Activated T-helper 1 cell treated with anti-CD3 and anti-CD28 coated beads, Interleukin-12 subunit alpha, Interleukin-12 subunit beta, Interleukin-2, Interleukin-4 antibody, amounts not matched to agents 30 ng/mL and 10 ng/mL and 1 ng/mL, durations not matched to agents 14 hours and 24 hours and 36 hours (primary cell): ENCODE measurements at regions of chrX and their contacts with region 1.

Region 1: DNA sequence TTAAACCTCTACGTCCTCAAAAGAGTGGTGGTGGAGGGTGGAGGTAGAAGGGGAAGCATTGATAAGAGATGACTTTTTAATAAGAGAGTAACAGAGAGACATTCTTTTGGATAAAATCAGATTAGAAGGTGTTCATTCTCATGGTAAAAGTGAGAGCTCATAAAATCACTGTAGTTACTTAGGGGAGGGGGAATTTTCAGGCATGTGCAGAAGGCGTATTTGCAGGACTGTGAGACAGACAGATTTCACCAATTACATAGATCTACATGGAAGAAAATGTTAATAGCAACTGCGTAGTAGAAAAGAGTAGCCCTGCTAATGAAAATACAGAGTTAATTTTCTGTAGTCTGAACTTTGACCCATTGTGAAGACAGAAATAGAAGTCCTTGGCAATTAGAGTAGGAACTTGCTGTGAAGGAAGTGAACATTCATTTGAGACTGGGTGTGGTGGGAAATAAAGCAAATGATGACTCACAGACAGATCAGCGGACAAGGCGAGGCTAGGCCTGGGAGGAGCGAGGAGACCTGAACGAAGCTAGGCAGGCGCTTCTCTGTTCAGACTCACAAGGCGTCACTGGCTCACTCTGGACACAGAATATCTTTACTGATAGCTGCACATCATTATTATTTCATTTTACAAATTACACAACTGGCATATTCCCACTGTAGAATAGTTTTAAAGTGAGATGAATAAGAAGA is 57.2 kb upstream of the FAM9C start:
- DNase-seq: peak; percentile 46
- H3K4me3 Mint-ChIP-seq: peak overlapping the region; percentile 22
- H3K27ac Mint-ChIP-seq: peak overlapping the region; percentile 79
- H3K4me1 Mint-ChIP-seq: peaks cover 51% of the 10 kb centered on the region
- H3K27me3 Mint-ChIP-seq: no peaks in the 10 kb centered on the region

Region 2: DNA sequence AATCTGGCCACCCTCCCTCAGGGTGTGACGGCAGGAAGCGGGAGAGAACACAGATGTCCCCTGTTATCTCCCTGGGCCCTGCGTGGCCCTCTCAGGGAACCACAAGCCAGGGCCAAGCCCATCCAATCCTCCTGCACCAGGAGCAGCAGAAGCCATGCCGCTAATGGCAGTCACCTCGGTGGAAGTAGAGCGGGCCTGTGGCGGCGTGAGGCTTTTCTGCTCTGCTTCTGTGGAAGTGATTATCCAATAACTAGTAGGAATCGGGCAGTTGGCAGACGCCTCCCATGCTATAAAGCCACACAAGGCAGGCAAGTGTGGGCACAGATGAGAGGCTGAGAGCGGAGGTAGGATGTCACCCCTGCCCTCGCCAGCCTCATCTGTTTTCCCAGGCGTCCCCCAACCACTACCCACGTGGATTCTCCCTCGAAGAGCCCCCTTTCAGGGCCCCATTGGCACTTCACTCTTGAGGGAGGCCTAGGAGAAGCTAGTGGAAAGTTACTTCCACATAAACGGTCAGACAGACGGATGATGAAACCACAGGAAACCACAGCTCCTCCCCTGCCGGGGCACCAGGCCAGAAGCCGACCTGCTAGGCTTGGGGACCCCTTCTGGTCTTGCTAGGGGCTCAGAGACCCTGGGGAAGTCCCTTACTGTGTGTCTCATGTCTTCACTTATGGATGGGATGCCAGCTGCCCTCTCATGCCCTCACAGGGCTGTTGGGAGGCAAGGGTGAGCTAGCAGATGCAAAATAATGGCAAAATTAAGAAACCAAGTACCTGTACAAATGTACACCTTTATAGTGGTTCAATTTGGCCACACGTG is 145.5 kb before region 1 on chrX:
- intact Hi-C with region 1: no loop called
- DNase-seq: peak; percentile 60
- H3K4me3 Mint-ChIP-seq: peak overlapping the region; percentile 86
- H3K27ac Mint-ChIP-seq: peak overlapping the region; percentile 99
- H3K4me1 Mint-ChIP-seq: peaks cover 79% of the 10 kb centered on the region
- H3K27me3 Mint-ChIP-seq: no peaks in the 10 kb centered on the region

Region 3: DNA sequence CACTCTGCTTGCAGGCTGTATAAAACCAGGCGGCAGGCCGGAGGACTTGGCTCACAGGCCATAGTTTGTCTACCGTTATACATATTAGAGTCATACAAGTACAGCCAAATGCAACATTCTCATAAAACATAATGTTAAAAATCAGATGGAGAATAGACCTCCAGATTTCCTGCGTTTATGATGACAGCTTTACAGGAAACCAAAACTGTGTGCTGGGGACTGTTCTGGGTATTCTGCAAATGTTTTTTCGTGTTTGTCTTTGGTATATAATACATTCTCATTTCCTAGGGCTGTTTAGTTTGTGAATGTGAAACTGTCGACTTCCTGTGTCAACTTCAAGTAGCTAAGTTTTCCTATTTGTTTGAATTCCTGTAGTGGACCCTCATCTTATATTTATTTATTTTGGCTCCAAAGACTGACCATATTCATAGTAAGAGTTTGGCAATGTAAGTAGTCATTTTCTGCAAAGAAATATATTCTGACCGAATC is 22.3 kb after region 1 on chrX:
- intact Hi-C with region 1: loop called (anchors 1 kb)
- DNase-seq: no peak
- H3K4me3 Mint-ChIP-seq: peak overlapping the region; percentile 57
- H3K27ac Mint-ChIP-seq: peak overlapping the region; percentile 86
- H3K4me1 Mint-ChIP-seq: peaks cover 42% of the 10 kb centered on the region
- H3K27me3 Mint-ChIP-seq: no peaks in the 10 kb centered on the region

Region 4: DNA sequence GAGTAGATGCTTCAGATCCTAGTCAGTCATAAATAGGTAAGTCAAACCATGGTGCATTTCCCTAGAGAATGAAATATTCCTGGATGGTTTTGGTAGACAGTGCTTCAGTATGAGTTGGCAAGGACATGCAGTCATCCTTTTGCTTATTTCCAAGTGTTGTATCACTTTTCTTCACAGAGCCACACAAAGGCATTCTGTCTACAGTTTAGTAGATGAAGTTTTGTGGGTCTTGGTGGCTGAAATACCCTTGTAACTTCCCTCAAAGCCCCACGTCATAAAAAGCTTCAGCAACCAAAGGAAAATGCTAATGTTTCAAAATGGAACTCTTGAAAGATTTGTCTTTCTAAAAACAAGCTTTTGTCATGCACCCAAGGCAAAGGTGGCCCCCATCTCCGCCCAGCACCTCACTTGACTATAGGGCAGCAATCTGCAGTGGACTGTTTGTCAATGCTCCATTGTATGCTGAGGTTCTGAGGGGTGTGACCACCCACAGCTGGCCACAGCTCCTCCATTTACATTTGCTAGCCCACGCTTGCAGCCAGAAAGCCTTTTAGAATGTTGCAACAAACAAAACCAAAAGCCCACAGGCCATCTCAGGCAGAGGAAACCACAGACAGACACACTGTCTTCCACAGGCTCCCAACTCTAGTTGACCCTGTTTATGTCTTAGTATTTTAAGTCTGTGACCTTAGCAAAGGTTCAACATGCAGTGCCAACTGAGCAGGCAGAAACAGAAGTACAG is 30.0 kb after region 1 on chrX:
- intact Hi-C with region 1: loop called (anchors 2 kb)
- DNase-seq: peak; percentile 6
- H3K4me3 Mint-ChIP-seq: peak overlapping the region; percentile 26
- H3K27ac Mint-ChIP-seq: peak overlapping the region; percentile 55
- H3K4me1 Mint-ChIP-seq: peaks cover 33% of the 10 kb centered on the region
- H3K27me3 Mint-ChIP-seq: no peaks in the 10 kb centered on the region

Region 5: DNA sequence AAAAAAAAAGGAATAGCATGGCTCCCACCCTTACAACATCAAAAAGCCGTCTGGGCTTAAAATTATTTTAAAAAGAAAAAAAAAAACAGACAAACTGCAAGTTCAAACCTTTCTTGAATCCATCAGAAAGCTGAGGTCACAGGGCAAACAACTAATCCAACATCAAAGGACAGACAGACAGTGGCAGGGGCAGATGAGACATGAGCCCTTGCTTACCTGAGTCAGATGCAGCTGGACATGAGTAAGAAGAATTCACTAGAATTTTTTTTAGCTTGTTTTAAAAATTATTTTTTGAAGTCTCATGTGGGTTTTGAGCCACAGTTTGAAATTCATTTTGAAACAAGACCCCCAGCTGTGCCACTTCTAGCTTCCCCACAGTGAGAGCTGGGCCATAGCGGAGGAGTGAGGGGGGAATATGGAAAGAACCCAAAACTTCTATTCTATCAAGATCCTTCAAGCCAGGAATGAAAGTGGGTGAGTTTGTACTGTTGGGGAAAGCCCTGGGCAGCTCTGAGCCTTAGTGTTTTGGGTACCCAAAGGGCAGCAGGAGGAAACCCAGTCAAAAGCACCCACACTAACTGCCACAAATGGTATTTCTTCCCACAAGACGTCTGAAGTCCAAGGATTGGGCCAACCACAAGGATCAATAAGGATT is 106.8 kb after region 1 on chrX:
- intact Hi-C with region 1: no loop called
- DNase-seq: no peak
- H3K4me3 Mint-ChIP-seq: no peak overlapping the region
- H3K27ac Mint-ChIP-seq: no peak overlapping the region
- H3K4me1 Mint-ChIP-seq: peaks cover 6% of the 10 kb centered on the region
- H3K27me3 Mint-ChIP-seq: no peaks in the 10 kb centered on the region

Region 6: DNA sequence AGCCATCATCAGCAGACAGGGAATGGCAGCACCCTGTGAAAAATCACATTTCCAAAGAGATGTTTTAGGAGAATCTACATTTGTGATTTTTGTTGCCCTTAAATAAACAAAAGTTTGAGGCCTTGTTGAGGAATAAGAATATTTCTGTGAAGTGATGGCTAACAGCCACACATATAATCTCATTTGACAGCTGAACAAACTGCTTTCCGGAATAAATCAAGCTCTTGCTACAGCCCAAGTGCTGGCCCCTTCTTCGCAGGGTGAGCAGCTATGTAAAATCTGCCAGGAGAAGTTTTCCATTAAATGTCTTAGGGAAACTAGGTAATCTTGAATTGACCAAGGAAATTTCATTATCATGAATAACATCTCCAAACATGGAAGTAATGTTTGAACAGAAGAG is 821.7 kb after region 1 on chrX:
- intact Hi-C with region 1: no loop called
- DNase-seq: no peak
- H3K4me3 Mint-ChIP-seq: no peak overlapping the region
- H3K27ac Mint-ChIP-seq: no peak overlapping the region
- H3K4me1 Mint-ChIP-seq: no peaks in the 10 kb centered on the region
- H3K27me3 Mint-ChIP-seq: peaks cover 7% of the 10 kb centered on the region